ENCODE measurements at regions of chr7 and their contacts with region 1.

Region 1: DNA sequence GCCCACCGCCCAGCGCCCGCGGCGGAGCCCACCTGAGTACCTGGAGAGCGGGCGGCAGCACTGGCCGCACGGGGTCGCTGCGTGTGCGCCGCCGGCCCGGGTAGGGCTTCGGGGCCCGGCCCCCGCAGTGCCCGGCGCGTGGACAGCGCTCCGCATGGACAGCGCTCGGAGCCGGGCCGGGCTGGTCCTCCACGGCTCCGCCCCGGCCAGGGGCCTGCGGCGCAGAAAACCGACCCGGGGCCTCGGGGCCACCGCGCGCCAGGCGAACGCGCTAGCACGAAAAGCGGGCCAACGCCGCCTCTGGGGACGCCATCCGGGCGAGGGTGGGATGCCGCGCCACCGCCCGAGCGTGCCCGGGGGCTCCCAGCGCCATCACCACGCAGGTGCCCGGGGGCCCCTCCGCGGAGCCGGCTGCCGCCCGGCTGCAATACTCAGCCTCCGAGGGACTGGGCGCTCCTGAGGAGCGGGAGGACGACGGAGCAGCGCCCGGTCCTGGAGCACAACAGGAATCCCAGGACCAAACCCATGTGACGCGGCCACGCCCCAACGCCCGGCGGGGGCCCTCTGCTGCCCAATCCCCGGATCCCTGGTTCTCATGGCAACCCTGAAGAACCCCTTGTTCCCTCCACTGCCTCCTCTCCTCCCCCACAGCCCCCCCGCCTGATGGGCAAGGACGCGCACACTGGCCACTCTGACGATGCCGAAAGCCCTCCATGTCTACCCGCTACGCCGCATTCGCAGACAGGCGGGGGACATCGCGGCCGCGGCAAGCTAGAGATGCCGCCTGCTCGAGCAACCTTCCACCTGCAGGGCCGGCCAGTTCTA is at the start of gene GRB10:
- DNase-seq: peak in 1 of 2 donors; percentile 71
- H3K4me3 ChIP-seq: peak within 1 kb of the TSS; percentile 48 to 67
- H3K27ac ChIP-seq: peak within 1 kb of the TSS in 1 of 2 donors; percentile 20
- H3K4me1 ChIP-seq: peaks cover 0 to 8% of the 10 kb centered on the region in 2 donors
- H3K27me3 ChIP-seq: no peaks in the 10 kb centered on the region
- CTCF ChIP-seq: peak in 1 of 3 experiments; percentile 6
- total RNA-seq, gene GRB10: 53.4 TPM

Region 2: DNA sequence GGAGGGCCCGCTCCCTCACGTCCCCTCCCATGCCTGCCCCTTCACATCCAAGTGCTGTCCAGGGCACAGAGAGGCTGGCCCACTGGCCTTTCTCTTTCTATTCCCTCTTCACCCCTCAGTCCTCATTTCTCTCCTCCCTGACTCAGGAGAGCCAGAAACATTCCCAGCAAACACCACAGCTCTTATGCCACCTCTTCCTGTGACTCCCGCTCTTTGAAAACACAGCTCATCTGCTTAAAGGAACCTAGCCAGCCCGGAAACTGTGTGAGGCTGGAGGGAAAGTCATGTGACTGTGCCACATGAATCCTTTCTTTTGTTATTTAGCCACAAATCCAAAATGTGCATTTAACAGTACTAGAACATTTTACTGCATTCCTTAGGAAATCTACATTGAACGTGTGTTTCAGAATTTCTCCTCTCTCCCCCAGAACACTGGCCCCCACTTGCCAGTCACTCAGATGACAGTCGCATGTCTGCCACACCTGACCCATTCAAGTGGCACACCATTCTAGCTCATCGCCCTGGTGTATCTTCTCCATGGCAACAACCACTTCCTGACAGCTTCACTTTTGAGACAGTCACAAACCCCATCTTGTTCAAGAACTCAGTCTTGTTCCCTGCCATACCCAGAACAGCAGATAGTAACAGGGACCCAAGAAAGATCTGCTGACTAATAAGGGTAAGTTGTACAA is 42.7 kb before region 1 on chr7:
- intact Hi-C with region 1: no loop called
- DNase-seq: no peak
- H3K4me3 ChIP-seq: no peak overlapping the region
- H3K27ac ChIP-seq: no peak overlapping the region
- H3K4me1 ChIP-seq: peaks cover 0 to 5% of the 10 kb centered on the region in 2 donors
- H3K27me3 ChIP-seq: no peaks in the 10 kb centered on the region
- CTCF ChIP-seq: no peak

Region 3: GRCh38 chr7:50771199-50772002 is 11.2 kb before region 1 on chr7:
- intact Hi-C with region 1: no loop called
- DNase-seq: no peak
- H3K4me3 ChIP-seq: no peak overlapping the region
- H3K27ac ChIP-seq: no peak overlapping the region
- H3K4me1 ChIP-seq: peaks cover 0 to 4% of the 10 kb centered on the region in 2 donors
- H3K27me3 ChIP-seq: no peaks in the 10 kb centered on the region
- CTCF ChIP-seq: no peak

Region 4: GRCh38 chr7:50838675-50839377 is 56.2 kb after region 1 on chr7:
- intact Hi-C with region 1: no loop called
- DNase-seq: peak; percentile 56 to 92
- H3K4me3 ChIP-seq: no peak overlapping the region
- H3K27ac ChIP-seq: peak overlapping the region; percentile 84 to 90
- H3K4me1 ChIP-seq: peaks cover 8 to 18% of the 10 kb centered on the region in 2 donors
- H3K27me3 ChIP-seq: no peaks in the 10 kb centered on the region
- CTCF ChIP-seq: no peak

Region 5: GRCh38 chr7:51067757-51068156 is 285.2 kb after region 1 on chr7:
- intact Hi-C with region 1: loop called (anchors 5 kb)
- DNase-seq: peak in 1 of 2 donors; percentile 71
- H3K4me3 ChIP-seq: peak overlapping the region in 1 of 2 donors; percentile 40
- H3K27ac ChIP-seq: no peak overlapping the region
- H3K4me1 ChIP-seq: no peaks in the 10 kb centered on the region
- H3K27me3 ChIP-seq: no peaks in the 10 kb centered on the region
- CTCF ChIP-seq: peak; percentile 23 to 71 (median 44)

Region 6: GRCh38 chr7:51141451-51142003 is 358.9 kb after region 1 on chr7:
- intact Hi-C with region 1: loop called (anchors 10 kb)
- DNase-seq: no peak
- H3K4me3 ChIP-seq: no peak overlapping the region
- H3K27ac ChIP-seq: no peak overlapping the region
- H3K4me1 ChIP-seq: no peaks in the 10 kb centered on the region
- H3K27me3 ChIP-seq: no peaks in the 10 kb centered on the region
- CTCF ChIP-seq: peak; percentile 10 to 72 (median 45)

Region 7: DNA sequence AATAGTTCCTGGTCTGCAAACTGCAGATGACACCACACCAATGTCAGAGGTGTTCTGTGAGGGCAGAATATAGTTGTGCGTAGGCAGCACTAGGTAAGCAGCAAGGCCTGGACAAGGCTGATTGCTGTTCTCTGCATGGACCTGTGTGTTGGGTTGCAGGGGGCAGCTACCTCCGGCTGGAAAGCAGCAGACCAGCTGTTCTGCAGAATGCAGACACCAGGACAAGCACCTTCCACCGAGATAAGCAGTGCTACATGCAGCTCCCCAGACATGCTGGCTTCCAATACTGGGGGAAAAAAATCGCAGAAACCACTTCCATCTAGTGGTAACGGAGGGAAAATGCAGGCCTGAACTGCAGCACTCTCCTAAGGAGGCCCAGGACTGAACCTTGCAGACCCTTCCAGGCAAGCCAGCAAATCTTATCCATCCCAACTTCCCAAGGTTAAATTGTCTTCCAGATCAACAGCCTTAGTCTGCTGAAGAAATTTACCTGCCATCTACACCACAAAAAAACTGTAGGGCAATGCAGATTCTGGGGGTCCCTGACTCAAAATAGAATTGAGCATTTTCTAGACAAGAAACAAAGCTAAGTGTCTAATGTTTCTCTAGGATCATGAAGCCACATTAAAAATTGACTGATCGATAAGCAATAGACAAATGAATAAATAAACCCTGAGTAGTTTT is 584.5 kb after region 1 on chr7:
- intact Hi-C with region 1: no loop called
- DNase-seq: no peak
- H3K4me3 ChIP-seq: no peak overlapping the region
- H3K27ac ChIP-seq: no peak overlapping the region
- H3K4me1 ChIP-seq: no peaks in the 10 kb centered on the region
- H3K27me3 ChIP-seq: no peaks in the 10 kb centered on the region
- CTCF ChIP-seq: peak in 2 of 3 experiments; percentile 27 to 39